Naive thymus-derived CD4-positive, alpha-beta T cell (primary cell): ENCODE measurements at regions of chr3 and their contacts with region 1.

Region 1: GRCh38 chr3:67662733-67663132 is 8.3 kb upstream of the SUCLG2 start:
- DNase-seq: peak in 7 of 9 donors; percentile 34 to 60 (median 44)
- ATAC-seq: peak; percentile 85
- H3K4me3 ChIP-seq: peak overlapping the region; percentile 18
- H3K4me3 Mint-ChIP-seq: peak overlapping the region; percentile 18 to 88 (median 69)
- H3K27ac ChIP-seq: no peak overlapping the region
- H3K27ac Mint-ChIP-seq: peak overlapping the region in 8 of 9 donors; percentile 34 to 89 (median 78)
- H3K4me1 ChIP-seq: peaks cover 18 to 34% of the 10 kb centered on the region in 2 donors
- H3K4me1 Mint-ChIP-seq: peaks cover 32 to 87% (median 73%) of the 10 kb centered on the region in 7 donors
- H3K27me3 ChIP-seq: no peaks in the 10 kb centered on the region
- H3K27me3 Mint-ChIP-seq: no peaks in the 10 kb centered on the region

Region 2: DNA sequence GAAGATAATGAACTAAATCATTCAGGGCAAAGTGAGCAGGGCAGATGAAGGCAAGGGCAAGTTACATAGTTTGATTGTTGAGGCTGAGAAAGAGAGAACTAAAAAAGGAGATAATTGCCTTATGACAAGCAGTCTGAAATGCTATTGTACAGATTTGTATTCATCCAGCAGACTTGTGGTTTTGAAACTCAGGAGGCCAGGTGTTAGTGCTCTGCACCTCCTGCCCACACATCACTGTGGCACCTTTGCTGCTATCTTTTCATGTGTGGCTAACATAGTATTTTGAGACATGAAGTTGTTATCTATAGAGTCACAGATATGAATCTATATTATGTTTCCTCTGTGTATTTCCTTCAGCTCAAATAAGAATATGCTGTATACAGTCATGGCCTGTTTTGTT is 15.9 kb after region 1 on chr3:
- CTCF ChIA-PET with region 1: interaction called, 5 read pairs
- POLR2A ChIA-PET with region 1: interaction called, 6 read pairs
- intact Hi-C with region 1: loop called in 1 of 2 experiments (anchors 1 kb)
- DNase-seq: peak in 3 of 9 donors; percentile 29 to 45 (median 36)
- ATAC-seq: peak; percentile 45
- H3K4me3 ChIP-seq: no peak overlapping the region
- H3K4me3 Mint-ChIP-seq: peak overlapping the region; percentile 1 to 64 (median 37)
- H3K27ac ChIP-seq: peak overlapping the region; percentile 28
- H3K27ac Mint-ChIP-seq: peak overlapping the region in 8 of 9 donors; percentile 67 to 88 (median 81)
- H3K4me1 ChIP-seq: peaks cover 21 to 27% of the 10 kb centered on the region in 2 donors
- H3K4me1 Mint-ChIP-seq: peaks cover 23 to 75% (median 51%) of the 10 kb centered on the region in 7 donors
- H3K27me3 ChIP-seq: no peaks in the 10 kb centered on the region
- H3K27me3 Mint-ChIP-seq: no peaks in the 10 kb centered on the region

Region 3: DNA sequence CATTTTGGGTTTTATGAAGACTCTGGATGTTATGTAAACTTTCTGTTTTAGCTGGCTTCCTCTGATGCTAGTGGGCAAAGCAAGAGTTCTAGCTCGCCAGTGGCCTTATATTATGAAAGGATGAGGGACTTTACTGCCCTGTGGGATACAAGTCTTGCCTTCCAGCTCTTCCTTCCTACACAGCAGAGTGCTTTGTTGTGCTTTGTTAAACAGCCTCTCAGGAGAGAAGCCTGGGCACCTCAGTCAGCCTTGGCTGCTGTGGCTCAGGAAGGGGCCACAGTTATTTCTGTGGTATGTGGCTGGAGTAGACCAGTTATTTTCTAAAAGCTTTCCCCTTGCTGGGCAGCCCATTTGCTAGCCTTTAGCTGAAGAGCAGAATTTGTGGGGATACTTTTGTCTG is 61.1 kb after region 1 on chr3:
- CTCF ChIA-PET with region 1: no interaction called
- POLR2A ChIA-PET with region 1: no interaction called
- intact Hi-C with region 1: no loop called
- DNase-seq: no peak
- ATAC-seq: no peak
- H3K4me3 ChIP-seq: no peak overlapping the region
- H3K4me3 Mint-ChIP-seq: no peak overlapping the region
- H3K27ac ChIP-seq: no peak overlapping the region
- H3K27ac Mint-ChIP-seq: no peak overlapping the region
- H3K4me1 ChIP-seq: no peaks in the 10 kb centered on the region
- H3K4me1 Mint-ChIP-seq: peaks cover 0 to 43% (median 22%) of the 10 kb centered on the region in 7 donors
- H3K27me3 ChIP-seq: no peaks in the 10 kb centered on the region
- H3K27me3 Mint-ChIP-seq: no peaks in the 10 kb centered on the region